Activated B cell treated with CpG ODN at 0.5 μM for 24 hours (primary cell): ENCODE measurements at regions of chr20 and their contacts with region 1.

Region 1: DNA sequence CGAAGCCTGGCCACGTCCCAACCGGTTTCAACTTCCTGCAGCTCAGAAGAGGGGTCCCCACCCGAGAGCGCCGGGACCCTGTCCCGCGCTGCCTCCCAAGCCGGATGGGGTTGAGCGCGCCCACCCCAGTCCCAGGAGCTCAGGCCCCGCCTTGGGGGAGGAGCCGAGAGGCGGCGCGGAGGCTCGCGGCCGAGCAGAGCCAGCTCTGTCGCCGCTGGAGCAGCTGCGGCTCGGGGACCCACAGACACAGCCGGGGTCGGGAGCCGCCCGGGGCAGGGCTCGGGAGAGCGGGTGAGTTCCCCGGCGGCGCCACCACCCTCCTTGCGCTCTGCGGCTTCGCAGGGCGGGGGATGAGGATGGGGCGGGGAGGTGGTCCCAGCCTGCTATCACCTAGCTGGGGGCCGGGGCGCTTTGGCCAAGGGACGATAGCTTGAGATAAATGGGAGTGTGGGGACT is at the start of gene PPP1R16B:
- DNase-seq: peak; percentile 80
- ATAC-seq: peak; percentile 77
- H3K4me3 Mint-ChIP-seq: peak within 1 kb of the TSS; percentile 93
- H3K27ac Mint-ChIP-seq: peak within 1 kb of the TSS; percentile 91
- H3K4me1 Mint-ChIP-seq: peaks cover 51% of the 10 kb centered on the region
- H3K27me3 Mint-ChIP-seq: no peaks in the 10 kb centered on the region
- CTCF ChIP-seq: no peak
- total RNA-seq, gene PPP1R16B: 98.3 and 99.3 TPM in 2 replicates

Region 2: DNA sequence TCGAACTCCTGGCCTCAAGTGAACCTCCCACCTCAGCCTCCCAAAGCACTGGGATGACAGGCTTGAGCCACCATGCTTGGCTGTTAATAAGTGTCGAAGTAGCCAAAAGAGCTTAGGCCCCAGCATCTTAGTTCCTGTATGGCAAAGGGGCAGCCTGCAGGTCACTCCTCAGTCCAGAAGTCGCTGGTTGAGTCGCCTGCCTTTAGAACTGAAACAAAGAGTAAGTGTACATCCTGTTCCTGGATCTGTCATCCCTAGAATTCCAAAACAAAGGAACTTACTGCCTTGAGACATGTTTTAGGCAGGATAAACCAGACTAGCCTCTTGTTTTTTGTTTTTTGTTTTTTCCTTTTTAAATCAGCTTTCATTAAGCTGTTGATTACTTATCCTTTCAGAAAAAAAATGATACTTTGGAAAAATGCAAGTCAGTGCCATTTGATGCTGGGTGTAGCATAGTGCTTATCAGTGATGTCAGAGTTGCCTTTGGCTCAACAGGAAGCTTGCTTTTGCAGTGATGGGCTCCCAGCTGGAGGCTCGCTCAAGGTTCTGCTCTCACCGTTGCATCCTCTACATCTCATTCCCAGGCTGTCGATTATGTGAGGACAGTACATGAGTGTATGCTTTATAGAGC is 48.3 kb before region 1 on chr20:
- CTCF ChIA-PET with region 1: no interaction called
- POLR2A ChIA-PET with region 1: no interaction called
- intact Hi-C with region 1: no loop called
- DNase-seq: no peak
- ATAC-seq: no peak
- H3K4me3 Mint-ChIP-seq: no peak overlapping the region
- H3K27ac Mint-ChIP-seq: no peak overlapping the region
- H3K4me1 Mint-ChIP-seq: no peaks in the 10 kb centered on the region
- H3K27me3 Mint-ChIP-seq: no peaks in the 10 kb centered on the region
- CTCF ChIP-seq: no peak

Region 3: DNA sequence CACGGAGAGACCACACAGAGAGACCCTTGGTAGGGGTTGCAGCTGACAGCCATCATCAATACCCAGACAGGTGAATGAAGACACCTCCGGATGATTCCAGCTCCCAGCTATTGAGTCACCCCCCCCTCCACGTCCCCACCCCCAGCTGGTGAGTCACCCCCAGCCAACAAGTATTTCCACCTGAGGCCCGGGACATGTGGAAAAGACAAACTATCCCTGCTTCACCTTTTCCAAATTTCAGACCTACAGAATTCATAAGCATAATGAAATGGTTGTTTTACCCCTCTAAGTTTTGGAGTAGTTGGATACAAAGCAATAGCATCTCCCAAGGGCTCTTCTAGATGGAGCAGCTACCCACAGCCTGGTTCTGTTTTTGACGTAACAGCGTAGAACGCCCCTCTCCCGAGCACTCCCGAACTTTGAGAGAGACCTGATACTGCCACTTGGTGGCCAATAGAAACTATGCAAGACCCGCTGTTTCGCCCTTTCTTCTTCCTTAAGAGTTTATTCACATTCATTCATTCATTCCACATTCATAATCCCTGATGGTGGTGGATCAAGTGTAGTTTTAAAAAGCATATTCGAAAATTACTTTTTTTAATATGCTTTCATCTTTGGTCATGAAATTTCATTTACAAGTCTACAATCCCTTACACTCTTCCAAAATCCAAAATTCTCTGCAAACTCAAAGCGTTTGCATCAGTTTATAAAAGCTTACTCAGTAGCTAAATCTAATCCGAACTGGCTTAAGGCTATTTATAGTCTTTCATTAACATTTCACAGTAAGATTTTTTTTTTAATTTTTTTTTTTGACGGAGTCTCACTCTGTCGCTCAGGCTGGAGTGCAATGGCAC is 15.1 kb before region 1 on chr20:
- CTCF ChIA-PET with region 1: interaction called, 13 read pairs
- POLR2A ChIA-PET with region 1: interaction called, 4 read pairs
- intact Hi-C with region 1: no loop called
- DNase-seq: no peak
- ATAC-seq: peak; percentile 81
- H3K4me3 Mint-ChIP-seq: peak overlapping the region; percentile 26
- H3K27ac Mint-ChIP-seq: no peak overlapping the region
- H3K4me1 Mint-ChIP-seq: peaks cover 4% of the 10 kb centered on the region
- H3K27me3 Mint-ChIP-seq: no peaks in the 10 kb centered on the region
- CTCF ChIP-seq: peak; percentile 30

Region 4: DNA sequence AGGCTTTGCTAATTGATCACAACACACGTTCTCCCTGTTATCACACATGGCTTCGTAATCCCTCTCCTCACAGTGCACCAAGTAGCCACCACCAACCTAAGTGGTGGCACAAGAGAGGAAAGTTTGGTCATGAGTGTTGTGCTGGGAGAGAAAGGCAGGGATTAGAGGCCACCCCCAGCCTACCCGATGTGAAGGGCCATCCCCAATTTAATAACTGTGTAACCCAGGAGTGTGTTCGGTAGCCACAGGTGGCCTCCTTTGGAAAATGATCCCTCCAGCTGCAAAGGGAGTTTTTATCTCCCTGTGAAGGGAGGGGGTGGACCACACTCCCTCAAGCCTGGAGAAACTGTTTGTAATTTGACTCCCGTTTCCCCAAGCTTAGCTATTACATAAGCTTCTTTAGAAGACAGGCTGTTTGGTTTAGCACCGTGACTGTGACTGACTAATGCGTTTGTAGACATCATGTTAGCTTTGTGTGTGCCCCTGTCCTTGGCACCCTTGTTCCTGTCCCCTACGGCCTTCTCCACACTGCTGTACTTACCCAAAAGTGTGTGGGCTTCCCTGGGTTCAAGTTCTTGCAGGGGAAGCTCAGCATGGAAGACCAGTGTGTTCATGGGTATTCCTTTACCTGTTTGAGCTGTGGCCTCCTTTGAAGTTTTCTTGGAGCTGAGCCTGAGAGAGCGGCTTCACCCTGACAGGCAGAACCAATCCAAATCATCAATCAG is 20.5 kb after region 1 on chr20:
- CTCF ChIA-PET with region 1: interaction called, 3 read pairs
- POLR2A ChIA-PET with region 1: interaction called, 8 read pairs
- intact Hi-C with region 1: loop called (anchors 2 kb)
- DNase-seq: no peak
- ATAC-seq: no peak
- H3K4me3 Mint-ChIP-seq: no peak overlapping the region
- H3K27ac Mint-ChIP-seq: peak overlapping the region; percentile 61
- H3K4me1 Mint-ChIP-seq: peaks cover 89% of the 10 kb centered on the region
- H3K27me3 Mint-ChIP-seq: no peaks in the 10 kb centered on the region
- CTCF ChIP-seq: no peak

Region 5: GRCh38 chr20:38842558-38842981 is 37.0 kb after region 1 on chr20:
- CTCF ChIA-PET with region 1: interaction called, 6 read pairs
- POLR2A ChIA-PET with region 1: interaction called, 140 read pairs
- intact Hi-C with region 1: loop called (anchors 1 kb)
- DNase-seq: peak; percentile 51
- ATAC-seq: peak; percentile 97
- H3K4me3 Mint-ChIP-seq: peak overlapping the region; percentile 75
- H3K27ac Mint-ChIP-seq: peak overlapping the region; percentile 97
- H3K4me1 Mint-ChIP-seq: peaks cover 93% of the 10 kb centered on the region
- H3K27me3 Mint-ChIP-seq: no peaks in the 10 kb centered on the region
- CTCF ChIP-seq: no peak

Region 6: DNA sequence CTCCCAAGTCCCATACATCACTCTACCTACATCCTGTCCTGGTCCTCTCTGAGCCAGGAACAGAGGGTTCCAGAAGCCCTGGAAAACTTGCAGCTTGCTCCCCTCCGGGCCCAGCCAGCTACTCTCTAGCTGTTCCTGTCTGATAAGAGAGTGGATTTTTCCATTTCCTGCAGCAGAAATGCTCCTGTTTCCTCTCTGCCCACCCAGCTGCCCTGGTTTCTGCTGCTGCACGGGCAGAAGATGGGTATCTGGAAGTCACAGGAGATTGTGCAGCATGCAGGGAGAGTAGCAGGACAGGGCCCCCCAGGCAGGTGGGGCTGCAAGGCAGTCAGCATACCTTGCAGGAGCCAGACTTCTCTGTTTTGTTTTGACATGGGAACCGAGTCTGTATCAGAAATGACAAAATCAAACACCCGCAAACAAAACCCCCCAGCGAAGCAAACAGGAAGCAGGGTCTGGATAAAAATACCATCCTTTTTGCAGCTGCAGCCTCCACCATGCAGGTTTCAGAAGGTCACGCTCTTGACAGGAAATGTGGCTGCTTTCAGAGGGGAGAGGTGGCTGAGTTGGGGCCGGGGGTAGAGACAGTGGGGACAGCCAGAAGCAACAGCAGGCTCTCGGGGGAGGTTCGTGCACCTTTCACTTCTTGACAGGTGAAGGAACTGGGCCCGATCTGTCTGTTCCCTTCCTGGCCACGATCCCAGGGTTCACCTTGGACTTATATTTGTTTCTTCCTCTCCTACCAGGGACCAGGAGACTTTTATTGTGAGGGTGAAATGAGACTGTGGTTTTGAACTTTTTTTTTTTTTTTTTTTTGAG is 69.9 kb after region 1 on chr20:
- CTCF ChIA-PET with region 1: interaction called, 9 read pairs
- POLR2A ChIA-PET with region 1: interaction called, 244 read pairs
- intact Hi-C with region 1: loop called (anchors 1 kb)
- DNase-seq: peak; percentile 60
- ATAC-seq: peak; percentile 63
- H3K4me3 Mint-ChIP-seq: peak overlapping the region; percentile 83
- H3K27ac Mint-ChIP-seq: peak overlapping the region; percentile 97
- H3K4me1 Mint-ChIP-seq: peaks cover 98% of the 10 kb centered on the region
- H3K27me3 Mint-ChIP-seq: no peaks in the 10 kb centered on the region
- CTCF ChIP-seq: no peak

Region 7: DNA sequence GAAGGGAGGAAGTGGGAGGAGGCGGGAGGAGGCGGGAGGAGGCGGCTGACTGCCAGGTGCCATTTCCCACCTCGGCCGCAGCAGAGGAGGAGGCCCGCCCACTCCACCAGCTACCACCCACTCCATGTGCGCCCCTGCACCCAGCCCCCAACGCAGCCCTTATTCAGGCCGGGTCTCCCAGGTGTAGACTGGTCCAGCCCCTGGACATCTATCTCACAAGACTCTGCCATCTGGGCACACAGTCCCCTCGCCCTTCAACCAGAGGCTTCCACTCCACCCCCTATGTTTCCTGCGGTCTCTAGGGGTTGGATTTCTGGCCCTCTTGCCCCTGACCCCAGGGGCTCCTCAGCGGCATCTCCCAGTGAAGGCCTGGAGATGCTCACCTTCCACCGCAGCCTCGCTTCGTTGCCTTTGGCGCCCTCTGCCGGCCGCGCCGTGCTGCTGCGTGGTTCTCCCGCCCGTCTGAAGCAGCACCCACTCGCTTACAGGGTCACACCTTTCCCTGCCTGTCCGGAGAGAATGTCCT is 88.1 kb after region 1 on chr20:
- CTCF ChIA-PET with region 1: interaction called, 82 read pairs
- POLR2A ChIA-PET with region 1: interaction called, 161 read pairs
- intact Hi-C with region 1: loop called (anchors 1 kb)
- DNase-seq: peak; percentile 76
- ATAC-seq: peak; percentile 77
- H3K4me3 Mint-ChIP-seq: peak overlapping the region; percentile 45
- H3K27ac Mint-ChIP-seq: peak overlapping the region; percentile 86
- H3K4me1 Mint-ChIP-seq: peaks cover 64% of the 10 kb centered on the region
- H3K27me3 Mint-ChIP-seq: no peaks in the 10 kb centered on the region
- CTCF ChIP-seq: peak; percentile 78